CD8-positive, alpha-beta T cell (primary cell): ENCODE measurements at regions of chr14 and their contacts with region 1.

Region 1: DNA sequence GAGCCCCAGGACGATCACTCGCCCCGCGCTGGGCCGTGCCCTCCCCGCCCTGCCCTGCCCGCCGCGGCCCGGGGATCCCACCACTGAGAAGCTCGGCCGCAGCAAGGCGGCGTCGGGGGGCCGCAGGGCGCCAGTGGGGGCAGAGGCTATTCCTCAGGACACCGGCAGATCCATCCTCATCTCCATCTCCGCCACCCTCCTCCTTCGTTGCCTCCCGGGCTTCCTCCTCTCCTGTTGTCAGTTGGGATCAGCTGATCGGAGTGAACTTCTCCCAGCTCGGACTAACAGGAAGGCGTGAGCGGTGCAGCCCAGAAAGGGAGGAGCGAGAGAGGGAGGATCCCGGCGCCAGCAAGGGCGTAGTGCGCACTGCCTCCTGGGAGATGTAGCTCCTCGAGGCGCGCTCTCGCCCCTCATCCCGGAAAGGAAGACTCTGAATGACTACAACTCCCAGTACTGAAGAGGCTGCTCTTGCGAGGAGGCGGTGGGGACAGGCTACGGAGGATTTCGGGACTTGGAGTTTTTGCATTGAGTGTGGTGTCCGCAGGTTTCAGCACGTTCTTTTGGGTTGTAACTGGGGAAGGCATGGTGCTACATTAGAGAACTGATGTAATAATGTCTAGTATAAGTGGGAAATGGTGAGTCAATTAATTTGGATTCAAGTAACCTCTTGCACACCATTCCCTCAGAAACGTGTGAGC is at the start of gene ZFYVE1:
- DNase-seq: peak; percentile 80 to 96 (median 91)
- ATAC-seq: peak; percentile 99
- H3K4me3 ChIP-seq: peak within 1 kb of the TSS; percentile 62 to 83
- H3K4me3 Mint-ChIP-seq: peak within 1 kb of the TSS; percentile 92
- H3K27ac ChIP-seq: peak within 1 kb of the TSS; percentile 48 to 52
- H3K27ac Mint-ChIP-seq: peak within 1 kb of the TSS; percentile 87
- H3K4me1 ChIP-seq: peaks cover 11% of the 10 kb centered on the region
- H3K4me1 Mint-ChIP-seq: peaks cover 45% of the 10 kb centered on the region
- H3K27me3 ChIP-seq: no peaks in the 10 kb centered on the region
- H3K27me3 Mint-ChIP-seq: no peaks in the 10 kb centered on the region
- CTCF ChIP-seq: no peak
- total RNA-seq, gene ZFYVE1: 10.0 to 11.3 TPM

Region 2: DNA sequence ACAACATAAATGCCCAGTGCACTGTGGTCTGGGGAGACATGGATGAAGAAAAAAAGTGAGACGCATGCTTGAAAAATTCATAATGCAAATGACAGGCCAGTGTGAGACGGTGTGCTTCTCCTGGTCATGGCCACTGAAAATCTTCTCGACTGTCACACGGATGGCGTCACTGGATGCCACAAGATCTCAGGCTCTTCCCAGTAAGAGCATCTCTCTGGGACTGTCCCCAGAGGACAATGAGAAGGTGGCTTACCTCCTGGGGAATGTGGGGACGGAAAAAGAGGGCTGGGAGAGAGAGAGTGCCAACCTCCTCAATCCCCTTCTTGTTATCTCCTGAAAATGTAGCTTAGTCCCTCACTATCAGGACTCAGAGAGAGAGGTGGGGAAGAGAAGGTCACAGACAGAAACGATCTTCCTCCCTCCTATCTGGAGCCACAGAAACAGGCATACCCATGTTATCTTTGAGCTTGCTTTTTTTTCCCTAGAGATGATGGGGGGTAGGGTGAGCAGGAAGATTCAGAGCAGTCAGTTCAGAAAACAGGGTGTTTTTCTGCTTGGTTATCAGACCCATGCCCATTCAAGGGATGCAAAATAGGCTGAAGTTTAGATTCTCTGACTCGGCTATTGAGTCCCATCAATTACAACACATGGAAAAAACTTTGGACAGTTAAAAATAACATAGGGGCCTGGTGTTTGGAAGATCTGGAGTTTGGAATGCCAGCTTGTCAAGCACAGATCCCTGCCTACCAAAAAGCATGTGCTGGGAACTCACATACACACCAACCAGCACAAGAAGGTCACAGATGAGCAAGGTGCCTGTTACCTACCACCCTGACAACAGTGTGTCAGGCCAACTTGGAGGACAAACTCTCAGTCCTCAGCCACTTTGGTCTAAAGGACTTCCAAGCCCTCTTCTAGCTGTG is 157.3 kb before region 1 on chr14:
- CTCF ChIA-PET with region 1: no interaction called
- POLR2A ChIA-PET with region 1: no interaction called
- intact Hi-C with region 1: no loop called
- DNase-seq: no peak
- ATAC-seq: no peak
- H3K4me3 ChIP-seq: no peak overlapping the region
- H3K4me3 Mint-ChIP-seq: no peak overlapping the region
- H3K27ac ChIP-seq: no peak overlapping the region
- H3K27ac Mint-ChIP-seq: no peak overlapping the region
- H3K4me1 ChIP-seq: no peaks in the 10 kb centered on the region
- H3K4me1 Mint-ChIP-seq: no peaks in the 10 kb centered on the region
- H3K27me3 ChIP-seq: no peaks in the 10 kb centered on the region
- H3K27me3 Mint-ChIP-seq: peaks cover 2% of the 10 kb centered on the region
- CTCF ChIP-seq: no peak

Region 3: DNA sequence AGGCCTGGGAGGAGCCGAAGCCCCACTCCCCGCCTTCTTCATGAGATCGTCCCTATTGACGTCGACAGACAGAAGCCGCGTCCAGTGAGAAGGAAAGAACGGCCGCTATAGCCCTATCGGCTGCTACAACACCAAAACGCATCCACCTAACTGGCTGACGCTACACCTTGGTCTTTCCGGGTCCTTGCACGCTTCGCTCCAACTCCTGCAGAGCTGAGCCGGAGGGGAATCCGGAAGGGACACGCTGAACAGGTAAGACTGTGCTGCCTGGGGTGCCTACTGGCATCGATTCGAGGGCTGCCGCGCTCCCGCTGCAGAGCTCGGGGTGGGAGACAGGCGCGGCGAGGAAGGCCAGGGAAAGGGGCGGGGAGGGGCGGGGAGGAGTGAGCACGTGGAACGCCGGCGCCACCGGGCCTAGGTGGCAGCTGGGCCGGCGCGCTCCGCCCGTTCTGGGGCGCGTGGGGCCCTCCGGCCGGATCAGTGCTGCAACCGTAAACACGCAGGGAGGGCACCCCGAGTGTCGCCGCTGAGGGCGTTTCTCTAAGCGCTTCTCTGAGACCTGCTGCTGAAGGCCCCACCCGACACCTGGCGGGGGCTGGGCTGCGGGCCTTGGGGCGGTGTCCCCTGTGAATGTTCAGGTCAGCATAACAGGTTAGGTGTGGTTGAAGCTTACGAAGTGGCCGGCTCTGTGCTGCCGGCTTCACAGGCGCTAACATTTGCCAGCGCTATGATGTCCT is 100.5 kb before region 1 on chr14 and contains the start of gene DCAF4:
- CTCF ChIA-PET with region 1: no interaction called
- POLR2A ChIA-PET with region 1: no interaction called
- intact Hi-C with region 1: loop called (anchors 1 to 2 kb)
- DNase-seq: peak; percentile 89 to 97 (median 93)
- ATAC-seq: peak; percentile 93
- H3K4me3 ChIP-seq: peak within 1 kb of the TSS; percentile 79 to 87
- H3K4me3 Mint-ChIP-seq: peak within 1 kb of the TSS; percentile 94
- H3K27ac ChIP-seq: peak within 1 kb of the TSS; percentile 67 to 76
- H3K27ac Mint-ChIP-seq: peak within 1 kb of the TSS; percentile 92
- H3K4me1 ChIP-seq: peaks cover 13% of the 10 kb centered on the region
- H3K4me1 Mint-ChIP-seq: peaks cover 15% of the 10 kb centered on the region
- H3K27me3 ChIP-seq: no peaks in the 10 kb centered on the region
- H3K27me3 Mint-ChIP-seq: peaks cover 2% of the 10 kb centered on the region
- CTCF ChIP-seq: no peak
- total RNA-seq, gene DCAF4: 21.9 to 26.6 TPM

Region 4: DNA sequence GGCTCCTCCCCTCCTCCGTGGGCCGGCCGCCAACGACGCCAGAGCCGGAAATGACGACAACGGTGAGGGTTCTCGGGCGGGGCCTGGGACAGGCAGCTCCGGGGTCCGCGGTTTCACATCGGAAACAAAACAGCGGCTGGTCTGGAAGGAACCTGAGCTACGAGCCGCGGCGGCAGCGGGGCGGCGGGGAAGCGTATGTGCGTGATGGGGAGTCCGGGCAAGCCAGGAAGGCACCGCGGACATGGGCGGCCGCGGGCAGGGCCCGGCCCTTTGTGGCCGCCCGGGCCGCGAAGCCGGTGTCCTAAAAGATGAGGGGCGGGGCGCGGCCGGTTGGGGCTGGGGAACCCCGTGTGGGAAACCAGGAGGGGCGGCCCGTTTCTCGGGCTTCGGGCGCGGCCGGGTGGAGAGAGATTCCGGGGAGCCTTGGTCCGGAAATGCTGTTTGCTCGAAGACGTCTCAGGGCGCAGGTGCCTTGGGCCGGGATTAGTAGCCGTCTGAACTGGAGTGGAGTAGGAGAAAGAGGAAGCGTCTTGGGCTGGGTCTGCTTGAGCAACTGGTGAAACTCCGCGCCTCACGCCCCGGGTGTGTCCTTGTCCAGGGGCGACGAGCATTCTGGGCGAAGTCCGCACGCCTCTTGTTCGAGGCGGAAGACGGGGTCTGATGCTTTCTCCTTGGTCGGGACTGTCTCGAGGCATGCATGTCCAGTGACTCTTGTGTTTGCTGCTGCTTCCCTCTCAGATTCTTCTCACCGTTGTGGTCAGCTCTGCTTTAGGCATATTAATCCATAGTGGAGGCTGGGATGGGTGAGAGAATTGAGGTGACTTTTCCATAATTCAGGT is 109.6 kb after region 1 on chr14 and contains the start of gene PSEN1:
- CTCF ChIA-PET with region 1: no interaction called
- POLR2A ChIA-PET with region 1: interaction called, 5 read pairs
- intact Hi-C with region 1: loop called (anchors 1 kb)
- DNase-seq: peak; percentile 98 to 100 (median 99)
- ATAC-seq: peak; percentile 96
- H3K4me3 ChIP-seq: peak within 1 kb of the TSS; percentile 84 to 92
- H3K4me3 Mint-ChIP-seq: peak within 1 kb of the TSS; percentile 97
- H3K27ac ChIP-seq: peak within 1 kb of the TSS; percentile 91 to 93
- H3K27ac Mint-ChIP-seq: peak within 1 kb of the TSS; percentile 99
- H3K4me1 ChIP-seq: peaks cover 17% of the 10 kb centered on the region
- H3K4me1 Mint-ChIP-seq: peaks cover 31% of the 10 kb centered on the region
- H3K27me3 ChIP-seq: no peaks in the 10 kb centered on the region
- H3K27me3 Mint-ChIP-seq: no peaks in the 10 kb centered on the region
- CTCF ChIP-seq: no peak
- total RNA-seq, gene PSEN1: 24.2 to 24.4 TPM

Region 5: DNA sequence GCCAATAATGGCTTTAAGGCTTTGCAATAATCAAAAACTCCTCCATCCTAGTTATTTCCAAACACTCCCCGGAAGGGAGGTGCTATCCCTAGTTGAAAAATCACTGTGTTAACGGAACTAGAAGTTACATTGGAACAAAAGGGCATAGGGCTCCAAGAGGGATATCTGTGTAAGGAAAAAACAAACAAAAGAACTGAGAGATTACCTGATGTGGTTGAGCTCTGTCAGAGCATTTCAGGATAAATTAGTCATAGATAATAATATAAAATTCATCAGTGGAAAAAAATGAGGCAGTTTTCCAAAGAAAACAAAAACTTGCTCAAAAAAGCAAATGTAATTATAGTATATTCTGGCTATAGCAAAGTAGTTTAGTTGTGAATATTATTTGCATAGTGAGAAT is 183.0 kb after region 1 on chr14:
- CTCF ChIA-PET with region 1: no interaction called
- POLR2A ChIA-PET with region 1: no interaction called
- intact Hi-C with region 1: no loop called
- DNase-seq: no peak
- ATAC-seq: no peak
- H3K4me3 ChIP-seq: no peak overlapping the region
- H3K4me3 Mint-ChIP-seq: no peak overlapping the region
- H3K27ac ChIP-seq: no peak overlapping the region
- H3K27ac Mint-ChIP-seq: no peak overlapping the region
- H3K4me1 ChIP-seq: no peaks in the 10 kb centered on the region
- H3K4me1 Mint-ChIP-seq: no peaks in the 10 kb centered on the region
- H3K27me3 ChIP-seq: no peaks in the 10 kb centered on the region
- H3K27me3 Mint-ChIP-seq: no peaks in the 10 kb centered on the region
- CTCF ChIP-seq: no peak

Region 6: DNA sequence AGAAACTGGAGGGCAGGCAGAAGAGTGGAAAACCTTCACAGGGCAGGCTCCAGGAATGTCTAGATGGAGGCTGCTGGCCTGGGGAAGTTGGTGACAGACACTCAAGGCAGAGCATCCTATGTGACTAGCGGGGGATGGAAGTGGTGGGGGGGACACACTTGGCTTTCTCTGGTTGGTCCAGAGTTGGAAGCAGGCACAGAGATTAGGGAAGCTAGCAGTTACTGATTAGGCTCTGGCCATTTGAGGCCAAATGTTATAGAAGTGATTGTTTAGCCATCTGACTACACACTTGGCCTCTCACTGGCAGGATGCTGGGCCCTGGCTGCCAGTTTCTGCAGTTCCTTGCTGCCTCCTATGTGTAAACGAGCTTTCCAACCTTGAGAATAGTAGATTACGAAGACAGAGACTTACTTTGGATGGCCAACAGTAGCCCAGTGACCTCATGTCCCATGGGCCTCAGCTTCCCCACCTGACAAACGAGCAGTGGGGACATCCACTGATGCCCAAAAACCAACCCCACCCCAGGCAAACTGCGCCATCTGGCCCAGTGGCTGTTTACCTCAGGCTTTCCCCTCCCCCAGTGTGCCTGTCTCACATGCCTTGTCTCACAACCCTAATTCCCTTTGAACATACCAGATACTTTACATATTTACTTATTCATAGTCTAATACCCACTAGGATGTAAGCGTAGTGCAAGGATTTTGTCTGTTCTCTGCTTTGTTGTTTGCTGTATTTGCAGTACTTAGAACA is 313.0 kb after region 1 on chr14:
- CTCF ChIA-PET with region 1: no interaction called
- POLR2A ChIA-PET with region 1: no interaction called
- intact Hi-C with region 1: no loop called
- DNase-seq: no peak
- ATAC-seq: no peak
- H3K4me3 ChIP-seq: no peak overlapping the region
- H3K4me3 Mint-ChIP-seq: no peak overlapping the region
- H3K27ac ChIP-seq: no peak overlapping the region
- H3K27ac Mint-ChIP-seq: no peak overlapping the region
- H3K4me1 ChIP-seq: no peaks in the 10 kb centered on the region
- H3K4me1 Mint-ChIP-seq: peaks cover 4% of the 10 kb centered on the region
- H3K27me3 ChIP-seq: no peaks in the 10 kb centered on the region
- H3K27me3 Mint-ChIP-seq: no peaks in the 10 kb centered on the region
- CTCF ChIP-seq: no peak